Activated naive CD8-positive, alpha-beta T cell treated with anti-CD3 and anti-CD28 coated beads, Interleukin-2, amount 10 ng/mL, durations not matched to agents 7 days and 5 days (primary cell): ENCODE measurements at regions of chr12 and their contacts with region 1.

Region 1: GRCh38 chr12:46372544-46373110 is at the start of gene SLC38A2:
- DNase-seq: peak; percentile 98
- ATAC-seq: peak; percentile 81
- H3K4me3 Mint-ChIP-seq: peak within 1 kb of the TSS; percentile 95
- H3K27ac Mint-ChIP-seq: peak within 1 kb of the TSS; percentile 96
- H3K4me1 Mint-ChIP-seq: peaks cover 38% of the 10 kb centered on the region
- H3K27me3 Mint-ChIP-seq: no peaks in the 10 kb centered on the region
- total RNA-seq, gene SLC38A2: 227 to 253 TPM

Region 2: DNA sequence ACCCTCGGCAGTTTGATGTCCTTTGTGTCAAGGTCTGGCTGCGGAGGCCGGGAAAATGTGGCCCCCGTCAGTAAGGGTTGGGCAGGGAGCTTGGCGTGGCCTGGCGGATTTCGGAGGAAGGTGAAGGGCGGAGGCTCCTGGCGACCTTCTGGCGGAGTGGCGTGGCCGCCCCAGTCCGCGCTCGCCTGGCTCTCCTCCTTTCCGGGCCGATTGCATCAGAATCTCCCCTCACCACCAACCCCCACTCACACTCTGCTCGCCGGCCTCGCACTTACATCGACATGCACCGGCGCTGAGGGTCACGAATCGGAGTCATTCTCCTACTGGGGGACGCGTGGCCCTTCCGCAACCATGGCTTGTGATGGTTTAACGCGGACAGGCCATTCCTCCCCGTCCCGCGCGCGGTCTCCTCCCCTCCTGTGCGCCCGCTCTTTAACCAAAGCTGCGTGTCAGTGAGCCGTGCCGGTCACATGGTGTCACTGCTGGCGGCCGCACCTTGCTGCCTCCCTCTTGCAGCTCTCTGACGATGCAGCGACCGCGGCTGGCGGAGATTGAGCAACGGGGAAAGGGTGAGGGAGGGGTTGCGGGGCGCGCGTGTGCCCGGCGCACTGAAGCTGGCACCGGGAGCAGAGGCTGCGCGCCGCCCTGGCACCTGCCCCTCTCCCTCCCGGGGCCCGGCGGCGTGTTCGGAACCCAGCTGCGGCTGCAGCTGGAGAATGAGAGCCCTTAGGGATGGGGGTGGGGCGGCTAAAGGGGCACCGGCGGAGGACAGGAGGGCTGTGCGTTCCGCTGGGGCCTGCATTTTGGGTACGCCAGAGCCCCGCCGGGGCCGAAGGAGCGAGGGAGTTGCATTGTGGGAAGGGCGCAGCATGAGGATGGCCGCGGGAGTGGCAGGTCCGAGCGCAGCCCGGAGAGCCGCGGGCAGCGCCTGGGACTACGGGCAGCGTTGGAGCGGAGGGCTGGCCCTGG is 103.8 kb before region 1 on chr12 and contains the start of gene SLC38A1:
- POLR2A ChIA-PET with region 1: interaction called, 63 read pairs
- DNase-seq: peak; percentile 88
- ATAC-seq: peak; percentile 72
- H3K4me3 Mint-ChIP-seq: no peak within 1 kb of the TSS
- H3K27ac Mint-ChIP-seq: no peak within 1 kb of the TSS
- H3K4me1 Mint-ChIP-seq: peaks cover 15% of the 10 kb centered on the region
- H3K27me3 Mint-ChIP-seq: no peaks in the 10 kb centered on the region
- total RNA-seq, gene SLC38A1: 194 to 207 TPM

Region 3: GRCh38 chr12:46401662-46402061 is 29.0 kb after region 1 on chr12:
- POLR2A ChIA-PET with region 1: no interaction called
- DNase-seq: no peak
- ATAC-seq: no peak
- H3K4me3 Mint-ChIP-seq: no peak overlapping the region
- H3K27ac Mint-ChIP-seq: no peak overlapping the region
- H3K4me1 Mint-ChIP-seq: peaks cover 41% of the 10 kb centered on the region
- H3K27me3 Mint-ChIP-seq: no peaks in the 10 kb centered on the region

Region 4: GRCh38 chr12:46430340-46430948 is 57.8 kb after region 1 on chr12:
- POLR2A ChIA-PET with region 1: interaction called, 10 read pairs
- DNase-seq: no peak
- ATAC-seq: peak; percentile 89
- H3K4me3 Mint-ChIP-seq: peak overlapping the region; percentile 57
- H3K27ac Mint-ChIP-seq: peak overlapping the region; percentile 75
- H3K4me1 Mint-ChIP-seq: peaks cover 15% of the 10 kb centered on the region
- H3K27me3 Mint-ChIP-seq: no peaks in the 10 kb centered on the region

Region 5: DNA sequence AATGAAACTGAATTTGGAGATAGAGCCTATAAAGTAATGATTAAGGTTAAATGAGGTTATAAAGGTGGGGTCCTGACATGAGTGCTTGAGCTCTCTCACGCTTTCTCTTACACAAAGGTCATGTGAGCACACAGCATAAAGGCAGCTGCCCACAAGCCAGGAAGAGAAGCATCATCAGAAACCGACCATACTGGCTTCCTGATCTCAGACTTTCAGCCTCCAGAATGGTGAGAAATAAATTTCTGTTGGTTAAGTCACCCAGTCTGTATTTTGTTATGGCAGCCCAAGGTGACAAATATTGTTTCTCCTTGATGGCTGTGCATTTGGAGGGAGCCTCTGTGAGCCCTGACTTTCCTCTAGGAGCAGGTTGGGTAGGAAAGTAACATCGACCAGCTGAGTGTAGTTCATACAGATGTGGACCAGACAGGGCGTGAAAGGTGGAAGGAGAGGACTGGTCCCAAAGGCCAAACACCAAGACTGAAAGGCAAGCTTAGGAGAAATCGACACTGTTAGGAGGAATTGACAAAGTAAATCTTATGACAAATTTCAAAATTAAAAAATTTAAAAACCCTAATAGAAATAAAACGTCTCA is 97.5 kb after region 1 on chr12:
- POLR2A ChIA-PET with region 1: interaction called, 27 read pairs
- DNase-seq: peak; percentile 34
- ATAC-seq: peak; percentile 99
- H3K4me3 Mint-ChIP-seq: peak overlapping the region; percentile 84
- H3K27ac Mint-ChIP-seq: peak overlapping the region; percentile 94
- H3K4me1 Mint-ChIP-seq: peaks cover 32% of the 10 kb centered on the region
- H3K27me3 Mint-ChIP-seq: no peaks in the 10 kb centered on the region

Region 6: DNA sequence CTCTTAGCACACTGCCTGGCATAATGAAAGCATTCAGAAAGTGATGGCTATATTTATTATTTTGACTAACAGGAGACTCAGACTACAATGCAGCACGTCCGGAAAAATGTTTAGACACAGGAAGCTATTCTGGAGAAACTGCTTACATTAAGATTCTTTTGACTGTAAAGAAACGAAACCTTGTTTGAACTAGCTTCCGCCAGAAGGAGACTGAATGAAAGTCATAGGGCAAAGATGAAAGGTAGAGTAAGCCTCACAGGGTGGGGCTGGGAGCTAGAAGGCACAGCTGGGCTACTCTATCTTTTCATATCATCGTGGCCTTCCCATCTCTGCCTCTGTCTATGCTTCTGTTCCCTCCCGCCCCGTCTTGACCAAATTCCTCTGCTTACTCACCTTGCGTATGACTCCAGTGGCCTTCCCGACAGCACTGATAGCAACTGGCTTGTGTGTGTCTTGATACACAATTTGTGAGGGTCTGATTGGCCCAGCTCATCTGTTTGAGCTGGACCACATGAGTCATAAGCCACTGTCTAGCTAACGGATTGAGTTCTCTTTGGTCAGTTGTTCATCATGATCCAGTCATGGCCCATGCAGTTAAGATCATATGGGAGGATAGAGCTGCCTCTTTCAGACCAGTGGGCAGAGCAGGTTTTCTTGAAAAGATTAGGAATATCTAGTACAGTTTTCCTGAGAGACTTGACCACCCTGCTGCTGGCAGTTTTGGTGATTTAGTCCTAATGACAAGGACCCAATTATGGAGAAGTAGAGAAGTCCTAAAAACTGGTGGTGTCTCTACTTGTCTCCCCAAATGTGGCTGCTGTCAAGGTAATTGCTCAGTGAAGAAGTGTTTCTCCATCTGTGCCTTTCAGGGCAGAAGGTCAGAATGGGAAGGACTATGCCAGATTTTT is 151.5 kb after region 1 on chr12:
- POLR2A ChIA-PET with region 1: interaction called, 38 read pairs
- DNase-seq: peak; percentile 54
- ATAC-seq: peak; percentile 96
- H3K4me3 Mint-ChIP-seq: peak overlapping the region; percentile 77
- H3K27ac Mint-ChIP-seq: peak overlapping the region; percentile 96
- H3K4me1 Mint-ChIP-seq: peaks cover 40% of the 10 kb centered on the region
- H3K27me3 Mint-ChIP-seq: no peaks in the 10 kb centered on the region